ENCODE measurements at regions of chr11 and their contacts with region 1.

Region 1: DNA sequence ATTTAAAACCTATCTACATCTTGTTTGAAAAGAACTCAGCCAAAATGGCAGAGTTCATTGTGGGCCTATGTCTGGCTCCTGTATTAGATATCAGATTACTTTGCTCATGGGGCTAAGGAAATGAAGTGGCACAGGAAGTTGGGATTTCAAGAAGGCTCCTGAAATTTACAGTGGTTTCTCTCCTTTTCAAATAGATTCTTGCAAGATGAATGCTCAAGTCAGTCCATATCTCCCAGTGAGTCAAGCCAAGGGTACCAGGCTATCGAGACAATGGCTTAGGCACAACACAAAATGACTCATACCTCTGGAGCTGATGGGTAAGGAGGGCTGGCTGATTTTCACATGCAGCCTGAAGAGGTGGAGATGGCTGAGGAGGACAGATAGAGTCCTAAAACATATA is 24.1 kb upstream of the APOA1 start:
- DNase-seq: no peak
- H3K4me3 ChIP-seq: no peak overlapping the region
- H3K27ac ChIP-seq: no peak overlapping the region
- H3K4me1 ChIP-seq: no peaks in the 10 kb centered on the region
- H3K27me3 ChIP-seq: no peaks in the 10 kb centered on the region
- CTCF ChIP-seq: no peak
- POLR2A ChIP-seq: no peak

Region 2: DNA sequence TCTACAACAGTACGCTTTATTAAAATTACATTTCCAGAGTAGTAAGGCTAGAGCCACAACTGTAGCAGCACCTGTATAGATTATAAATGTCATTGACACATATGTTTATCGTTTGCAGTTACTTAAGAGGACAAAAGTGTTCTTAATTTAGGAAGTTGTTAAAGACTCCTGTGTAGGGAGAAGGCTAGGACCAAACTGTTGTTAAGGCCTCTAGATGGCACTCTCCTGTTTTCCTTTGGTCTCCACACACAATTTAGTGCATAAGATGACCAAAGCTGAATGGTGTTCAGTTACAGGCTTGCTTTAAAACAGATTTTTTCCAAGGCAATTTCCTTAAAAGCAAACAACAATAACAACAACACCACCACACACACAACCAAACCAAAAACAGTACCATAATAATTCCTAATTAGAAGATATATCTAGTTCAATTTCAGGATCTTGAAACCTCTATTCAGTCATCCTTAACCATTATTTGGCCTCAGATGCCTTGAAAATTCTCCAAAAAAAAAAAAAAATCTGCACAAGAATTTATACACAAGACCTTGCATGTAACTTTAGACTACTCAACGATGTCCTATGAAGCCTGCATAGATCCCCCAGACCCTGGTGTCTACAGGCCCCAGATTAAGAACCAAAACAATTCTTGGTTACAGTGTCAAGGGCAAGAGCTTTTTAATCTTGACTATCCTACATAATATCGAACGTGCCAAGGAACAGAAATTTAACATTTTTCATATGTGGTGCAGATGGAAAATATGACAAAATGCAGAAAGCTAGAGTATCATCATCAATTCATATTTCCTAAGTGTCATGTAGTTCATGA is 18.5 kb after region 1 on chr11:
- intact Hi-C with region 1: no loop called
- DNase-seq: no peak
- H3K4me3 ChIP-seq: no peak overlapping the region
- H3K27ac ChIP-seq: no peak overlapping the region
- H3K4me1 ChIP-seq: no peaks in the 10 kb centered on the region
- H3K27me3 ChIP-seq: no peaks in the 10 kb centered on the region
- CTCF ChIP-seq: peak in 2 of 3 donors; percentile 49 to 53
- POLR2A ChIP-seq: no peak

Region 3: GRCh38 chr11:116896211-116896610 is 34.7 kb after region 1 on chr11:
- intact Hi-C with region 1: loop called (anchors 2 kb)
- DNase-seq: no peak
- H3K4me3 ChIP-seq: no peak overlapping the region
- H3K27ac ChIP-seq: no peak overlapping the region
- H3K4me1 ChIP-seq: no peaks in the 10 kb centered on the region
- H3K27me3 ChIP-seq: no peaks in the 10 kb centered on the region
- CTCF ChIP-seq: no peak
- POLR2A ChIP-seq: no peak